Activated naive CD4-positive, alpha-beta T cell treated with anti-CD3 and anti-CD28 coated beads for 36 hours (primary cell): ENCODE measurements at regions of chr1 and their contacts with region 1.

Region 1: DNA sequence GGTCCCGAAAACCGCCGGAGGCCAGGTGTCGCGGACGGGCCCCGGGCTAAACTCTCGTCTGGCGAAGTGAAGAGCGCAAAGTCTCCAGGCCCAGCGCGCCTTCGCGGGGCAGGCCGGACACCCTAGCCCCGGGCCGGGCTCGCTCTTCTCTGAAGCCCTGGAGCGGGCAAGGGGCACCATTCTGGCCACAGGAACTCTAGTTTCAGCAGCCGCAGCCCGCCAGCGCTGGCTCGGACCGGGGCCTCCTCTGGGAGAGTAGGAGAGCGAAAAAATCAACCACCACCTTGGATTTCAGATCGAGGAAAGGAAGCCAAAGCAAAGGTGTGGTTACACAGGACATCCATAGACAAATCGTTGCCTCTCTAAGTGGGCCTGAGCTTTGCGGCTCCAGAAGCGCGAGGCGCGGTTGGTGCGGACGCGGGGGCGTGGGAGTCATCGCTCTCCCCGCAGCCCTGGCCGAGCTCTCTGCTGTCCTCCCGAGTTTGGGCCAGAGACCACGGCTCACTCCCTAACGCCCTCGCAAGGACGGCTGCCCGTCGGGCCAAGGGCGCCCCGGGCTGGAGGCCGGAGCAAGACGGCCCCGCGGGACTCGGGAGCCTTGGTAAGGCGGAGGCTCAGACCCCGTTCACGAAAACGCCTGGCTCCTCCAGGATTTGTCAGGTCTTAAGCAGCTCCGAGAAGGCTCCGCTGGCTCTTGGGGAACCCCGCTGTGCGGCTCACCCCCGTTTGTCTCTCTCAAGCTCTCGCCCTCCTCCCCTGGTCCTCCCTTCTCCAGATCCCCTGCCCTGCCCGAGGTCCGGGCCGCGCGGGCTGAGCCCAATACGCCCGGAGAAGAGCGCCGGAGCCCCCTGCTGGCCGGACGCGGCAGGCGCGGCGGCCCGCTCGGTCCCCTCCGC is 132.9 kb upstream of the DPYD start:
- DNase-seq: peak; percentile 50
- H3K4me3 Mint-ChIP-seq: peak overlapping the region; percentile 62
- H3K27ac Mint-ChIP-seq: no peak overlapping the region
- H3K4me1 Mint-ChIP-seq: peaks cover 19% of the 10 kb centered on the region
- H3K27me3 Mint-ChIP-seq: peaks cover 54% of the 10 kb centered on the region

Region 2: DNA sequence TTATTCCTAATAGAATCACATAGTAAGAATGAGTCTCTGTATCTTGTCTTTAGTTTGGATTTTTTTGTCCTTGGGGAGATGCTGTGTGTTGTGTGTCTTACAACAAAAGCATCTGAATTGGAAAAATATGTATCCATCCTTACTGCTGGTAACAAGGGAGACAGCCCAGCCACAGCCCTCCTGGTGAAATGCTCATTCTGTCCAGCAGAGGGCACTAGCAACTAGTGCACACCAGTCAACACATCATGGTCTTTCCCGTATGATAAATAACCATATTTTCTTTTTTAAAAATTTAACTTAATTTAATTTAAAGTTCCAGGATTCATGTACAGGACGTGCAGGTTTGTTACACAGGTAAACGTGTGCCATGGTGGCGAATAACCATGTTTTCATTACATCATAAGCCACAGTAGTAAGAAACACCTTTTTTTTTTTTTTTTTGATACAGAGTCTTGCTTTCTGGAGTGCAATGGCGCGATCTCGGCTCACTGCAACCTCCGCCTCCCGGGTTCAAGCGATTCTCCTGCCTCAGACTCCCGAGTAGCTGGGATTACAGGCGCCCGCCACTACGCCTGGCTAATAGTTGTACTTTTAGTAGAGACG is 1087.1 kb before region 1 on chr1:
- CTCF ChIA-PET with region 1: interaction called, 3 read pairs
- intact Hi-C with region 1: loop called (anchors 1 kb)
- DNase-seq: peak; percentile 87
- H3K4me3 Mint-ChIP-seq: no peak overlapping the region
- H3K27ac Mint-ChIP-seq: no peak overlapping the region
- H3K4me1 Mint-ChIP-seq: no peaks in the 10 kb centered on the region
- H3K27me3 Mint-ChIP-seq: peaks cover 31% of the 10 kb centered on the region

Region 3: GRCh38 chr1:97186404-97186803 is 867.3 kb before region 1 on chr1:
- CTCF ChIA-PET with region 1: no interaction called
- intact Hi-C with region 1: loop called (anchors 1 kb)
- DNase-seq: peak; percentile 6
- H3K4me3 Mint-ChIP-seq: no peak overlapping the region
- H3K27ac Mint-ChIP-seq: no peak overlapping the region
- H3K4me1 Mint-ChIP-seq: no peaks in the 10 kb centered on the region
- H3K27me3 Mint-ChIP-seq: no peaks in the 10 kb centered on the region

Region 4: DNA sequence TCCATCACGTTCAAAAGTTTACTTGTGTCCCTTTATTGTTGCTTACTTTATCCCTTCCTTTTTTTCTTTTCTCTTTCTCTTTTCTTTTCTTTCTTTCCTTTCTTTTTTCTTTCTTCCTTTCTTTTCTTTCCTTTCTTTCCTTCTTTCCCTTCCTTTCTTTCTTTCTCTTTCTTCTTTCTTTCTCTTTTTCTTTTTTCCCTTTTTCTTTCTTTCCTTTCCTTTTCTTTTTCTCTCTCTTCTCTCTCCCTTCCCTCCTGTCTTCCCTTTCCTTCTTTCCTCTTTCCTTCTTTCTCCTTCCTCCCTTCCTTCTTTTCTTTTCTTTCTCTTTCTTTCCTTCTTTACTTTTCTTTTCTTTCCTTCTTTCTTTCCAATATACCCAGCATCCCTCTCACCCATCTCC is 524.1 kb before region 1 on chr1:
- CTCF ChIA-PET with region 1: no interaction called
- intact Hi-C with region 1: loop called (anchors 5 kb)
- DNase-seq: no peak
- H3K4me3 Mint-ChIP-seq: no peak overlapping the region
- H3K27ac Mint-ChIP-seq: no peak overlapping the region
- H3K4me1 Mint-ChIP-seq: no peaks in the 10 kb centered on the region
- H3K27me3 Mint-ChIP-seq: no peaks in the 10 kb centered on the region

Region 5: GRCh38 chr1:97726383-97726782 is 327.3 kb before region 1 on chr1:
- CTCF ChIA-PET with region 1: no interaction called
- intact Hi-C with region 1: no loop called
- DNase-seq: no peak
- H3K4me3 Mint-ChIP-seq: no peak overlapping the region
- H3K27ac Mint-ChIP-seq: no peak overlapping the region
- H3K4me1 Mint-ChIP-seq: peaks cover 4% of the 10 kb centered on the region
- H3K27me3 Mint-ChIP-seq: no peaks in the 10 kb centered on the region

Region 6: DNA sequence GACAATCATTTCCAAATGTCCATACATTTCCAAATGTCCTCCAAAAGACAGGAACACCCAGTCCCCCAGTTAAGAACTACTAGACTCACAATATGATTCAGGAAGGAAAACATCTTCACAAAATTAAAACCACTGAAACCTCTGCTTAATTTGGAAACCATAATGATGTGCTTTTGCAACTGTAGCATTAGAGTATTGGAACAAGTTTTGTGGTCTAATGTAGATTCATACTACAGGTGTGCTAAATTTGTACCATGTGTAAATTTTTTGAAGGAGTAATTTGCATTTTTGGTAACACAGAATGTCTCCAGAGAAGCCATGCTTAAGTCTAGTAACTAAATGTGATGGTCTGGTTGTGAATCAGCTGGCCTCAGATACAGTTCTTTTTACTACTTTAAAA is 262.5 kb before region 1 on chr1:
- CTCF ChIA-PET with region 1: interaction called, 4 read pairs
- intact Hi-C with region 1: loop called (anchors 5 kb)
- DNase-seq: no peak
- H3K4me3 Mint-ChIP-seq: no peak overlapping the region
- H3K27ac Mint-ChIP-seq: peak overlapping the region; percentile 8
- H3K4me1 Mint-ChIP-seq: peaks cover 35% of the 10 kb centered on the region
- H3K27me3 Mint-ChIP-seq: no peaks in the 10 kb centered on the region

Region 7: GRCh38 chr1:98468111-98468717 is 414.5 kb after region 1 on chr1:
- CTCF ChIA-PET with region 1: no interaction called
- intact Hi-C with region 1: loop called (anchors 2 kb)
- DNase-seq: no peak
- H3K4me3 Mint-ChIP-seq: no peak overlapping the region
- H3K27ac Mint-ChIP-seq: no peak overlapping the region
- H3K4me1 Mint-ChIP-seq: no peaks in the 10 kb centered on the region
- H3K27me3 Mint-ChIP-seq: no peaks in the 10 kb centered on the region